ENCODE measurements at regions of chr1 and their contacts with region 1.

Region 1: DNA sequence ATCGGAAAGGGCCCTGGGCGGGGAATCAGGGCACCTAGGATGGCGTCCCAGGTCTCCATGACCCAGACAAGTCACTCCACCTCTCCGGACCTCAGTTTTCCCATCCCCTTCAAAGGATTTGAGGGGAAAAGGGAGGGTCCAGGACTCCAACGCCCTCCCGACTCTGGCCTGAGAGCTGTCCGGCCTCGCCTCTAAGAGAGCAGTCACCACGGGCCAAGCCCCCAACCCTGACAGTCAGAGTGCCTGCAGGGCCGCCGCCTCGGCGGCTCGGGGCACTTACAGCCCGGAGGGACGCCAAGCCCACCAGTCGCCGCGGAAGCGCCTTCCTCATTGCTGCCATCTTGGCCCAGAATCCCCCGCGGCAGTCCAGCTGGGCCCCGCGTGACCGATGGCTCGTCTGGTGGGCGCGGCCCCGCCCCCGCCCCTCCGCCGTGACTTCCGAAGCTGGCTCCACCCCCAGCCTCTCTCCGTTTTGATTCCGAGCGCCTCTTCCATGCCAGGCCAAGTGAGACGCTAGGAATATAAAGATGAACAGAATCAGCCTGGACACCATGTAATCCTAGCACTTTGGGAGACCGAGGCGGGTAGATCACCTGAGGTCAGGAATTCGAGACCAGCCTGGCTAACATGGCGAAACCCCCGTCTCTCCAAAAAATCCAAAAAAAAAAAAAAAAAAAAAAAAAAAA is at the start of gene HMGCL:
- DNase-seq: peak; percentile 90
- ATAC-seq: peak; percentile 98
- H3K4me3 Mint-ChIP-seq: peak within 1 kb of the TSS; percentile 88
- H3K27ac Mint-ChIP-seq: peak within 1 kb of the TSS; percentile 85
- H3K4me1 Mint-ChIP-seq: peaks cover 14% of the 10 kb centered on the region
- H3K27me3 Mint-ChIP-seq: no peaks in the 10 kb centered on the region
- total RNA-seq, gene HMGCL: 35.4 to 37.2 TPM

Region 2: GRCh38 chr1:23800400-23801337 is 24.6 kb before region 1 on chr1 and contains the start of gene GALE:
- POLR2A ChIA-PET with region 1: interaction called, 12 read pairs
- DNase-seq: peak; percentile 97
- ATAC-seq: peak; percentile 89
- H3K4me3 Mint-ChIP-seq: peak within 1 kb of the TSS; percentile 99
- H3K27ac Mint-ChIP-seq: peak within 1 kb of the TSS; percentile 92
- H3K4me1 Mint-ChIP-seq: peaks cover 17% of the 10 kb centered on the region
- H3K27me3 Mint-ChIP-seq: no peaks in the 10 kb centered on the region
- total RNA-seq, gene GALE: 18.6 to 19.4 TPM

Region 3: DNA sequence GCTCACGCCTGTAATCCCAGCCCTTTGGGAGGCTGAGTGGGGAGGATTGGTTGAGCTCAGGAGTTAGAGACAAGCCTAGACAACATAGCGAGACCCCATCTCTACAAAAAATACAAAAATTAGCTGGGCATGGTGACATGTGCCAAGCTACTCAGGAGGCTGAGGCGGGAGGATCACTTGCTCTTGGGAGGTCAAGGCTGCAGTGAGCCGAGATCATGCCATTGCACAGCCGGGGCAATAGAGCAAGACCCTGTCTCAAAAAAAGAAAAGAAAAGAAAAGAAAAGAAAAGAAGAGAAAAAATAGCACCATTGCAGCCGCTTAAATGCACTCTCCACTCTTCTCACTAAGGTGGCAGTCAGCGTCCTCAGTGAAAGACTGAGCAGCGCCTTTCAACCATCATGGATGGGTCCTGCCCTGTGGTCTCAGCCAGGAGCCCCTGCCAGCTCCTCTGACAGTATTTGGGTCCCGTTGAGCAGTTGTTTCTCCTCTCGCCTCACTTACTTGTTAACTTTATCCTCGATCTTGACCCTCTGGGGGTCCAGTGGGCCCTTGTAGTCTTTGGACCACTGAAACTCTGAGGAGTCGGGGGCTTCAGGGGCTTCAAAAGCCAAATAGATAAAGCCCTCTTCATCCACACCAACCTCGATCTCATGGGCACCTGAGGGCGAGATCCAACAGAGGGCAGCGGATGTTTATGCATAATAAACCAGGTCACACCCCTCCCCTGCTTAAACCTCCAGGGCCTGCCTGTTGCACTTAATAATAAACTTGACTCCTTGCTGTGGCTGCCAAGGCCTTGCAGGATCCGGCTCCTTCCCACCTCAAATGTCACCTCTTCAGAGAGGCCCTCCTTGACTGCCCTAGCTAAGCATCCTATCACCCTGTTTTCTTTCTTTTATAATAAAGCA is 249.9 kb after region 1 on chr1:
- POLR2A ChIA-PET with region 1: no interaction called
- DNase-seq: no peak
- ATAC-seq: no peak
- H3K4me3 Mint-ChIP-seq: no peak overlapping the region
- H3K27ac Mint-ChIP-seq: no peak overlapping the region
- H3K4me1 Mint-ChIP-seq: peaks cover 5% of the 10 kb centered on the region
- H3K27me3 Mint-ChIP-seq: no peaks in the 10 kb centered on the region

Measured in activated naive CD8-positive, alpha-beta T cell treated with anti-CD3 and anti-CD28 coated beads, Interleukin-2, amount 10 ng/mL, durations not matched to agents 7 days and 5 days (primary cell).